Activated B cell treated with CpG ODN at 0.5 μM for 24 hours (primary cell): ENCODE measurements at regions of chr5 and their contacts with region 1.

Region 1: DNA sequence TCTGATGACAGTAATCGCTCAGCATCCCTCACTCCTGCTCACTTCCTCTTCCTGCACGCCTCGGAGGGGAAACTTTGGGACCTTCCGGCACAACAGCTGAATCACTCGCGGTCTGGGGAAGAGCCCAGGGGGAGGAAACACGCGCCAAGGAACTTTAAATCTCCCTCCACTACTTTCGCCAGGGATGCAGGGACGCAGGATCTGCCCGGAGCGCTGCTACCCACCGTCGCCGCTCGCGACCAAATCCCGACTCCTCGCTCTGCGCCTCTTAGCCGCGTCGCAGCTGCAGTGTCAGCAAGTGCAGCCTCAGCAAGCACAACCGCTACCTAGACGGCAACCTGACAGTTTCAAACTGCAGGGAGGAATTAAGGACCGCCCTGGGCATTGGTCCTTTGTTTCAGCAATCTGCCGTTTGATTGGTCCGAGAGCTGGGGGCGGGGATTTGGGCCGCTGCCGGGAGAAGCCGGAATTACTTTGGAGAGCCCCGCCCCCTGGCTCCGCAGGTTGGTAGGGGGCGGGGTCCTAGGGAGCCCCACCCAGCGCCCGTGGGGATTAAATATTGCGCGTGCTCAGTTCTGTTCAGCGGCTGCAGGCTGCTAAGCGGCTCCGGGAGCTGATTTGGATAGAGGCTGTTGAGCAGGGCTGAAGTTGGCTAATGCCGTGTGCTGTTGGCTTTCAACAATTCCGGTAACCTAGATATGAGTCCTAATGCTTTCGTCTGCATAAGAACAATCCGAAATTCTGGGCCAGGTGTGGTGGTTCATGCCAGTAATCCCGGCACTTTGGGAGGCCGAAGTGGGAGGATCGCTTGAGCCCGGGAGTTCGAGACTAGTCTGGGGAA is at the start of gene POC5:
- DNase-seq: peak; percentile 96
- ATAC-seq: peak; percentile 92
- H3K4me3 Mint-ChIP-seq: peak within 1 kb of the TSS; percentile 98
- H3K27ac Mint-ChIP-seq: peak within 1 kb of the TSS; percentile 98
- H3K4me1 Mint-ChIP-seq: peaks cover 32% of the 10 kb centered on the region
- H3K27me3 Mint-ChIP-seq: peaks cover 2% of the 10 kb centered on the region
- CTCF ChIP-seq: no peak
- total RNA-seq, gene POC5: 27.6 and 29.8 TPM in 2 replicates

Region 2: GRCh38 chr5:74684900-74685851 is 1032.1 kb before region 1 on chr5 and contains the start of gene HEXB:
- CTCF ChIA-PET with region 1: no interaction called
- POLR2A ChIA-PET with region 1: interaction called, 4 read pairs
- intact Hi-C with region 1: loop called (anchors 5 kb)
- DNase-seq: peak; percentile 77
- ATAC-seq: peak; percentile 86
- H3K4me3 Mint-ChIP-seq: peak within 1 kb of the TSS; percentile 81
- H3K27ac Mint-ChIP-seq: peak within 1 kb of the TSS; percentile 63
- H3K4me1 Mint-ChIP-seq: peaks cover 18% of the 10 kb centered on the region
- H3K27me3 Mint-ChIP-seq: no peaks in the 10 kb centered on the region
- CTCF ChIP-seq: no peak
- total RNA-seq, gene HEXB: 34.5 and 43.2 TPM in 2 replicates

Region 3: DNA sequence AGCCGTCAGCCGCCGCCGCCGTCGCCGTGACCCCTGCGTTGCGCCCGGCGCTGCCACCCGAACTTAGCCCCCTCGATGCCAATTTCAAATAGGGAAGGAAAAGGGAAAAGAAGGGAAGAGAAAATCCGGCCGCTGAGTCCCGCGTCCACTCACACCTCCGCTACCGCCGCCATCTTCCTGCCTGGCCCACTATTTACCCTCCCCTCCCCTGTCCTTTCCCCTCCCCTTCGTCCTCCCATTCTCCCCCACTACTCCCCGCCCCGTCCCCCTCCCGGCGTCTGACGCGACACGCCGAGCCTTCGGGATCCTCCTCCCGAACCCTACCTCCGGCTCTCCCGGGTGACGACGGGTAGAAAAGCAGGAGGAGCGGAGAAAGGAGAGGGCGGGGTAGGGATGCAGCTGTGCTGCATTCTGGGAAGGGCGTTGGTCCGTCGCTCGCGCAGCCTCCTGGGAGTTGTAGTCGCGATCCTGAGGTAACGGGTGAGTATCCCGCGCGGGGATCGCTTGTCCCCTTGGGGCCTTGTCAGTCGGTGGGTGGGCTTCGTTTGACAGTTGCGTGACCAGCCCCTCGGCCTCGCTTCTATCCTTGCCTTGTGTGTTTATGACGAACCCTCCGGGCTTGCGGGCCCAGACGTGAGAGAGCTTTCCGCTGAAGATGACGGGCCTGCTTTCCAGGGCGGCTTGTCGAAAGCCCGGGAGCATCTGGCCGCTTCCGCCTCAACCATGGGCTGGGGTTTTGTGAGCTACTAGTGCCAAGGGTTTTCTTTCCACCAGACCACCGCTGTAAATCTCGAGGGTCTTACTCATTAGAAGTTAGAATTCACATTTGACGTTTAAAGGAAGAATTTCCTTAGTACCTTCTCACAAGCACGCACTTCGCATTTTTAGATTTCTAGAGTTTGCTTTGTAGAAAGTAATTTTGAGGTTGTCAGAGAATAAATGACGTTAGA is 205.6 kb before region 1 on chr5 and contains the starts of genes CERT1 and POLK:
- CTCF ChIA-PET with region 1: no interaction called
- POLR2A ChIA-PET with region 1: interaction called, 3 read pairs
- intact Hi-C with region 1: loop called (anchors 1 kb)
- DNase-seq: peak; percentile 85
- ATAC-seq: peak; percentile 90
- H3K4me3 Mint-ChIP-seq: peak within 1 kb of the TSS; percentile 95
- H3K27ac Mint-ChIP-seq: peak within 1 kb of the TSS; percentile 95
- H3K4me1 Mint-ChIP-seq: peaks cover 70% of the 10 kb centered on the region
- H3K27me3 Mint-ChIP-seq: no peaks in the 10 kb centered on the region
- CTCF ChIP-seq: no peak
- total RNA-seq, gene CERT1: 39.1 and 49.5 TPM in 2 replicates
- total RNA-seq, gene POLK: 29.0 and 34.0 TPM in 2 replicates

Region 4: GRCh38 chr5:75574791-75575190 is 142.5 kb before region 1 on chr5:
- CTCF ChIA-PET with region 1: no interaction called
- POLR2A ChIA-PET with region 1: no interaction called
- intact Hi-C with region 1: loop called (anchors 2 kb)
- DNase-seq: no peak
- ATAC-seq: no peak
- H3K4me3 Mint-ChIP-seq: peak overlapping the region; percentile 76
- H3K27ac Mint-ChIP-seq: peak overlapping the region; percentile 86
- H3K4me1 Mint-ChIP-seq: peaks cover 37% of the 10 kb centered on the region
- H3K27me3 Mint-ChIP-seq: no peaks in the 10 kb centered on the region
- CTCF ChIP-seq: no peak

Region 5: GRCh38 chr5:76175051-76175666 is 457.9 kb after region 1 on chr5:
- CTCF ChIA-PET with region 1: interaction called, 3 read pairs
- POLR2A ChIA-PET with region 1: no interaction called
- intact Hi-C with region 1: loop called (anchors 5 kb)
- DNase-seq: peak; percentile 16
- ATAC-seq: peak; percentile 57
- H3K4me3 Mint-ChIP-seq: peak overlapping the region; percentile 2
- H3K27ac Mint-ChIP-seq: no peak overlapping the region
- H3K4me1 Mint-ChIP-seq: peaks cover 15% of the 10 kb centered on the region
- H3K27me3 Mint-ChIP-seq: peaks cover 2% of the 10 kb centered on the region
- CTCF ChIP-seq: no peak

Region 6: GRCh38 chr5:76544268-76544926 is 827.1 kb after region 1 on chr5:
- CTCF ChIA-PET with region 1: no interaction called
- POLR2A ChIA-PET with region 1: no interaction called
- intact Hi-C with region 1: loop called (anchors 10 kb)
- DNase-seq: no peak
- ATAC-seq: no peak
- H3K4me3 Mint-ChIP-seq: no peak overlapping the region
- H3K27ac Mint-ChIP-seq: no peak overlapping the region
- H3K4me1 Mint-ChIP-seq: peaks cover 45% of the 10 kb centered on the region
- H3K27me3 Mint-ChIP-seq: peaks cover 2% of the 10 kb centered on the region
- CTCF ChIP-seq: no peak